Body of pancreas (tissue), 4 donors: ENCODE measurements at regions of chr7 and their contacts with region 1.

Region 1: DNA sequence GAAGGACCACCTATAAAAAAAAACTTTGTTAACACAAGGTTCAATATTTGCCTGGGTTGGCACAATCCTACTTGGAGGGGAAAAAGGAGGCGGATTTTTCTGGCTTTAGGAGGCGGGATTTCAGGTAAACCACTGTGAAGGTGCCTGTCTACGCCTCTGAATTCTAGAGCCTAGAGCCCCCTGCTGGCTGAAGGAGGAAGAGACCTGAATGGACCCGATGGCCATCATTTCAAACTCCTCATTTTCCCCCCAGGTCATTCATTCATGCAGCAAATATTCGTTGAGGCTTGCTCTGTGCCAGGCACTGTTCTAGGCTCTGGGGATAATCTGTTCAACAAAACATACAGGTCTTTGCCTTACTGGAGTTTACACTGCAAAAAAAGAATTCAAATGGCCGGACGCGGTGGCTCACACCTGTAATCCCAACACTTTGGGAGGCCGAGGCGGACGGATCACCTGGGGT is 90.3 kb upstream of the NFE2L3 start:
- DNase-seq: peak; percentile 85 to 92 (median 90)
- ATAC-seq: peak; percentile 93
- H3K4me3 ChIP-seq: no peak overlapping the region
- H3K27ac ChIP-seq: peak overlapping the region in 3 of 4 donors; percentile 33 to 75 (median 42)
- H3K4me1 ChIP-seq: peaks cover 30% of the 10 kb centered on the region
- H3K27me3 ChIP-seq: no peaks in the 10 kb centered on the region
- CTCF ChIP-seq: peak; percentile 74 to 93 (median 89)
- POLR2A ChIP-seq: no peak

Region 2: DNA sequence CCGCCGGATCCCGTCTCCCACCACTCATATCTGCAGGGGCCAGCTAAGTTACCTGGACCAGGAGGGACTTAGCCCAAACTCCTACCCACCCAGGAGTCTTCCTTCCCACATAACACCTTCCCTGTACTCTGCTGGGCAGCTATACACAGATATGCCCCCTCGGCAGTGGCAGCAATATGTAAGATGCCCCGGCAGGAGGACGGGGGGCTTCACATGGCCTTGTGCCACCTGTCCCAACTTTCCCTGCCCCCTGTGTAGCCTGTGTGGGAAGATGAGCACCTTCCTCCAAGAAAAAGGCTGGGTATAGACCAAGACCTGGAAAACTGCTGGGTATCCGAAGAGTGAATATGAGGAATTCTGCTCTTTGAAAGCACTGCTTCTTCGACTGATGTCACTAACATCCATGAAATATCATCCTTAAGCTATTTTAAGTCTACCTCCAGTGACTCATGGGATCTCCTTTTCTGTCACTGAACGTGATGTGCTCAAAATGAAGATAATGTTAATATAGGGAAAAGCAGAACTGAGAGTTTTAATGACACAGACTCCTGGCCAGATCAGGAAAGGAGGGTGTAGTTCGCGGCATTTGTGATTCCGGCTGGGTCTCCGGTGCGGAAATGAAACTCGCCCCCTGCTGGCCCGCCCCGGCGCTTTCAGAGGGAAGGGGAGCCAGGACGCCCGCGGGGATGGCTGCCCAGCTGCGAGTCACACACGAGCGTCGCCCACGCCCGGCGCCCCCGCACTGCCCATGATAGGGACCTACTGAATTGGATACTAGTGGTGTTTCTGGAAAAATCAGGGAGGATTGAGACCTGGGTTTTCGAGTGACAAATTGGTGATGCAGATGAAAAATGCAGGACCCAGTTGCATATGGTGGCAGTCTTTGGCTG is 166.6 kb before region 1 on chr7:
- intact Hi-C with region 1: loop called (anchors 5 kb)
- DNase-seq: peak; percentile 72 to 83 (median 78)
- ATAC-seq: peak; percentile 76
- H3K4me3 ChIP-seq: no peak overlapping the region
- H3K27ac ChIP-seq: peak overlapping the region; percentile 29 to 60 (median 40)
- H3K4me1 ChIP-seq: peaks cover 42% of the 10 kb centered on the region
- H3K27me3 ChIP-seq: no peaks in the 10 kb centered on the region
- CTCF ChIP-seq: peak; percentile 57 to 78 (median 71)
- POLR2A ChIP-seq: peak in 2 of 3 donors; percentile 26 to 52

Region 3: DNA sequence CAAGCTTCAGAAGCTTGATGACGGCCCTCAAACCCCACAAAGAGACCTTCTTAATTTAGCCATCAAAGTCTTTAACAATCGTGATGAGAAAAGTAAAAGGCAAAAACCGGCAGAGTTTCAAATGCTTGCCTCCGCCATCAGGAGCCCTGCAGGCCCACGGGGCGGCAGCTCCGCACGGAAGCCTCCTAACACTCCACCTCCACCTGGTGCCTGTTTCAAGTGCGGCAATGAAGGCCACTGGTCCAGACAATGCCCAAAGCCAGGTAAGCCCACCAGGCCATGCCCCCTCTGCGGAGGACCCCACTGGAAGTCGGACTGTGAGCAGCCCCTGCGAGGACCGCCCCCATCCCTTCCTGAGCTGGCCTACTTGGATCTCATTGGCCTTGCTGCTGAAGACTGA is 183.4 kb after region 1 on chr7:
- intact Hi-C with region 1: no loop called
- DNase-seq: no peak
- ATAC-seq: no peak
- H3K4me3 ChIP-seq: no peak overlapping the region
- H3K27ac ChIP-seq: no peak overlapping the region
- H3K4me1 ChIP-seq: no peaks in the 10 kb centered on the region
- H3K27me3 ChIP-seq: no peaks in the 10 kb centered on the region
- CTCF ChIP-seq: no peak
- POLR2A ChIP-seq: no peak

Region 4: DNA sequence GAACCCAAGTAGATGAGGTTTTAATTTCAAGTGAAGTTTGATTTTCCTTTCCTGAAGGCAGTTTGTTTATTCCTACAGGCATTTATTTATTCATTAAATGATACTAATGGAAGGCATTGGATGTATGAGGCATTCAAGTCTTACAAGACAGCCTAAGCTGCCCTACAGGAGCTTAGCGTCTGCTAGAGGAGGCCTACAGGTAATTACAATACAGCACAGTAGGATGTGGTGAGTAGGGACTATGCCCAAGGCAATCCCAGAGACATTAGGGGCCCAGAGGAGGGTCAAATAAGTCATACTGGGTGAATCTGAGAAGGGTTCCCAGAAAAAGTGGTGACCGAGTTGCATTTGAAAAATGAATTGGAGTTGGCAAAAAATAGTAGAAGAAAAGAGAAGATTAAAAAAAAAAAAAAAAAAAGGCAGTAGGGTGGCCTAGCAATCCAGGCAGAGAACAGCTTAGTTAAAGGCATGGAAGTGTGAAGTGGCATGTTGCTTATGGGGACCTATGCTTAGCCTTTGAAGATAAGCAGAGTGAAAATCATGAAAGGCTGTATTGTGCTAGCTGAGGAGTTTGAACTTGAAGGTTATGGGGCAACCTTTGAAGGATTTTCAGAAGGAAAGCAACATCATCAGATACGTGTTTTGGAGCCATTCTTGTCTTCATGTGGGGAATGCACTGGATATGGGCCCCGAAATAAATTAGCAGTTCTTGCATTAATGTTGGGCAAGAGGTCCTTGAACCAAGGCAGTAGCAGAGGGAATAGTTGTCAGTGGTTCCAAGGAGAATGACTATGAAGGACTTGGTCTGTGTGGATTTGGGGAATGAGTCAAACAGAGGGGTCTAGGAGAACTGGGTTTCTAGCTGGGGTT is 295.4 kb after region 1 on chr7:
- intact Hi-C with region 1: loop called (anchors 10 kb)
- DNase-seq: no peak
- ATAC-seq: no peak
- H3K4me3 ChIP-seq: no peak overlapping the region
- H3K27ac ChIP-seq: no peak overlapping the region
- H3K4me1 ChIP-seq: no peaks in the 10 kb centered on the region
- H3K27me3 ChIP-seq: no peaks in the 10 kb centered on the region
- CTCF ChIP-seq: no peak
- POLR2A ChIP-seq: no peak